Endothelial cell of umbilical vein (primary cell): ENCODE measurements at regions of chr6 and their contacts with region 1.

Region 1: DNA sequence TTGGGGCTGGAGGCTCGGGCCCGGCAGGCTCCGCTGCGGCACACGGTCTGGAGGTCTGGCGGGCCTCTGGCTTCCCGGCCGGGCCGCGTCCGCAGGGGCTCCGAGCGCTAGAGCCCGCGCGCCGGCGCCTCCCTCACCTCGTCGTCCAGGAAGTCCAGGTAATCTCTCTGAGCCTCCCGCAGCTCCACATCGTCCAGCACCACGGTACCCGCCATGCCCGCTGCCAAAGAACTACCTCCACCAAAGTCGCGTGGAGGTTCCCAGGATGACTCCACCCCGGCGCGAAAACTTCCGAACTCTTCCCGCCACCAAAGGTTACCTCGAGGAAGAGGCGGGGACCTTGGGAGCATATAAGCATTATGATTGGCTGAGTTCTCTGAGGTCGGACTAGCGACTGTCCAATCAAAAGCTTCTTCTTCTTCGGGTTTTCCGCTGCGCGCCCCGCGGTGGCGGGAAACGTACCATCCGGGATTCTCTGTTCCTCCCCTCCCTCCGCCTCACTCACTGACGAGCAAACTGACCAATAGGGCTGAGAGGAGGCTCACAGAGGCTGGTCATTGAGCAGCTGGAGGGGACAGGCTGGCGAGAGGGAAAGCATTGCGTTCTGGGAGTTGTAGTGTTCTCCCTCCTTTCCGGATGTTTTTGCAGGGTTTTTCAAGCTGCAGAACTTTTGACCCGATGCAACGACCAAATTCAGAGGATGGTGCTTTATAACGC is at the start of gene MCM3:
- DNase-seq: peak; percentile 100
- H3K4me3 ChIP-seq: peak within 1 kb of the TSS; percentile 59 to 92 (median 71)
- H3K27ac ChIP-seq: peak within 1 kb of the TSS; percentile 51
- H3K4me1 ChIP-seq: peaks cover 15% of the 10 kb centered on the region
- H3K27me3 ChIP-seq: no peaks in the 10 kb centered on the region
- CTCF ChIP-seq: no peak
- POLR2A ChIP-seq: peak; percentile 47
- total RNA-seq, gene MCM3: 80.6 and 81.6 TPM in 2 replicates

Region 2: DNA sequence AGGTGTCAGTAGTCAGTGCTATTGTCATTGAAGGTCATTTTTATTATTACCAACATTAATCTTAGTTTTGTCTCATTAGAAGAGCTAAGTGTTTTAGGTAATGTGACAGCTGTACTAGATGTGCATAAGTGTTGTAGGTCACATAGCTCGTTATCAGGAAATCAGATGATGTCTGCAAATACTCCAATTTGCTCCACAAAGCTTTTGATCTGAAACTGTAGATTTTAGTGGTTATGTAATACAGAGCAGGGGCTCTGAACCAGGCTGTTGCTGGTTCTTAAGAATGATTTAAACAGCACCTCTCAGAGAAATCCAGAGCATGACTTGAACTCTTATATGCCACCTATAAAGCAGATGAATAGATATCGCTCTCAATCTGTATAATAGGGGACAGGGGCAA is 42.8 kb before region 1 on chr6:
- CTCF ChIA-PET with region 1: no interaction called
- POLR2A ChIA-PET with region 1: no interaction called
- dilution Hi-C with region 1: no loop called
- intact Hi-C with region 1: no loop called
- DNase-seq: no peak
- H3K4me3 ChIP-seq: no peak overlapping the region
- H3K27ac ChIP-seq: no peak overlapping the region
- H3K4me1 ChIP-seq: no peaks in the 10 kb centered on the region
- H3K27me3 ChIP-seq: peaks cover 0 to 2% of the 10 kb centered on the region in 2 experiments
- CTCF ChIP-seq: no peak
- POLR2A ChIP-seq: no peak

Region 3: DNA sequence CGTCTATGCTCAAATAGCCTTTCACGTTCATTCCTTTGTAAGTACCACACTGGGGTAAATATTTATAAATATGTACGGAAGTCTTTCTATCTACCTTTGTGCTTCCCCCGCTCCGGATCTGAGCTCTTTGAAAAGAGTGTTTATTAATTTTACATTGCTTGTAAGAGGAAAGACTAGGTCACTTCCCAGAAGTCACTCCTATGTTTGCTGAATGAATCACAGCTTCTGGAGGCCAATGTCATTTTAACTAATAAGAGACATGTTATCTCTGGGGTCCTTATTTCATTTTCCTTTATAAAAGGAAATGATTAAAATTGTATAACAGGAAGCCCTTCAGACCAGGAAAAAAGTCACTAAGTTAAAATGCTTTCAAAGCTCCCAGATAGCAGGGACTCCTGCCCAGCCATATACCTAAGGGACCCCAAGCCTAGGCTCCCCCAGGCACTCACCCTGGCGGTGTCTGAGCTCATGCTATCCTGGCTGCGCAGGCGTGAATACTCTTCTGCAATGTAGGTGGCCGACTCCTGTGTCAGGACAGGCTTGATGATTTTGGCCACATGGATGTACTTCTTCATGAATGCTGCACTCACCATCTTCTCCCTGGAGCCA is 12.7 kb before region 1 on chr6:
- CTCF ChIA-PET with region 1: interaction called, 20 read pairs
- POLR2A ChIA-PET with region 1: no interaction called
- dilution Hi-C with region 1: no loop called
- intact Hi-C with region 1: loop called (anchors 1 kb)
- DNase-seq: peak; percentile 85
- H3K4me3 ChIP-seq: no peak overlapping the region
- H3K27ac ChIP-seq: peak overlapping the region; percentile 65
- H3K4me1 ChIP-seq: peaks cover 24% of the 10 kb centered on the region
- H3K27me3 ChIP-seq: no peaks in the 10 kb centered on the region
- CTCF ChIP-seq: no peak
- POLR2A ChIP-seq: no peak

Region 4: GRCh38 chr6:52330470-52330869 is 45.9 kb after region 1 on chr6:
- CTCF ChIA-PET with region 1: no interaction called
- POLR2A ChIA-PET with region 1: no interaction called
- dilution Hi-C with region 1: no loop called
- intact Hi-C with region 1: no loop called
- DNase-seq: no peak
- H3K4me3 ChIP-seq: no peak overlapping the region
- H3K27ac ChIP-seq: no peak overlapping the region
- H3K4me1 ChIP-seq: no peaks in the 10 kb centered on the region
- H3K27me3 ChIP-seq: peaks cover 2 to 7% of the 10 kb centered on the region in 2 experiments
- CTCF ChIP-seq: no peak
- POLR2A ChIP-seq: no peak

Region 5: GRCh38 chr6:52352239-52353008 is 67.8 kb after region 1 on chr6:
- CTCF ChIA-PET with region 1: interaction called, 8 read pairs
- POLR2A ChIA-PET with region 1: no interaction called
- dilution Hi-C with region 1: no loop called
- intact Hi-C with region 1: loop called (anchors 2 kb)
- DNase-seq: peak; percentile 85
- H3K4me3 ChIP-seq: no peak overlapping the region
- H3K27ac ChIP-seq: peak overlapping the region; percentile 26
- H3K4me1 ChIP-seq: peaks cover 13% of the 10 kb centered on the region
- H3K27me3 ChIP-seq: peaks cover 1 to 2% of the 10 kb centered on the region in 2 experiments
- CTCF ChIP-seq: no peak
- POLR2A ChIP-seq: no peak

Region 6: DNA sequence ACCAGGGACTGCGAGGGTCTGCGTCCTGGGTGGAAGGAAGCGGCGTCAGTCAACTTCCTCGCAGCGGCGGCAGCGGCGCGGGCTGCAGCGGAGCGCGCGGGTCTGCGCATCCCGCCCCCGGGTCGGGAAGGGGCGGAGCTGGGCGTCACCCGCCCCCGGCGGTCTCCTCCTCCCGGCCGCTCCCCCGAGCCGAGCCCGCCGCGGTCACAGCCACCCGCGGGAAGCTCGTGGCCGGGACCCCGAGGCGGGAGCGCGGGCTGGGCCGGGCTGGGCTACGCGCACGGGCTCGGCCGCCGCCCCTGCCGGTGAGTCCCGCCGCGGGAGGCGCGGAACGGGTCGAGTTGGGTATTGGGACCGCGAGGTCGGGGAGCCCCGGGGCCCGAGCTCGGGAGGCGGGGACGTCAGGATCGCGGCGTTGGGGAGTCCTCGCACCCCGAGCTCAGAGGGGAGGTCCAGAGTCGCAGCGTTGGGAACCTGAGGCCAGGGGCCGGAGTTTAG is 77.4 kb after region 1 on chr6 and contains the start of gene PAQR8:
- CTCF ChIA-PET with region 1: interaction called, 13 read pairs
- POLR2A ChIA-PET with region 1: interaction called, 9 read pairs
- dilution Hi-C with region 1: no loop called
- intact Hi-C with region 1: loop called (anchors 1 kb)
- DNase-seq: peak; percentile 66
- H3K4me3 ChIP-seq: peak within 1 kb of the TSS; percentile 78 to 97 (median 88)
- H3K27ac ChIP-seq: peak within 1 kb of the TSS; percentile 41
- H3K4me1 ChIP-seq: peaks cover 12% of the 10 kb centered on the region
- H3K27me3 ChIP-seq: no peaks in the 10 kb centered on the region
- CTCF ChIP-seq: no peak
- POLR2A ChIP-seq: peak; percentile 42
- total RNA-seq, gene PAQR8: 6.0 TPM in 2 replicates

Region 7: GRCh38 chr6:52389626-52390360 is 105.2 kb after region 1 on chr6:
- CTCF ChIA-PET with region 1: interaction called, 12 read pairs
- POLR2A ChIA-PET with region 1: no interaction called
- dilution Hi-C with region 1: loop called (anchors 25 kb)
- intact Hi-C with region 1: loop called (anchors 2 kb)
- DNase-seq: peak; percentile 73
- H3K4me3 ChIP-seq: no peak overlapping the region
- H3K27ac ChIP-seq: peak overlapping the region; percentile 37
- H3K4me1 ChIP-seq: peaks cover 20% of the 10 kb centered on the region
- H3K27me3 ChIP-seq: no peaks in the 10 kb centered on the region
- CTCF ChIP-seq: no peak
- POLR2A ChIP-seq: no peak

Region 8: DNA sequence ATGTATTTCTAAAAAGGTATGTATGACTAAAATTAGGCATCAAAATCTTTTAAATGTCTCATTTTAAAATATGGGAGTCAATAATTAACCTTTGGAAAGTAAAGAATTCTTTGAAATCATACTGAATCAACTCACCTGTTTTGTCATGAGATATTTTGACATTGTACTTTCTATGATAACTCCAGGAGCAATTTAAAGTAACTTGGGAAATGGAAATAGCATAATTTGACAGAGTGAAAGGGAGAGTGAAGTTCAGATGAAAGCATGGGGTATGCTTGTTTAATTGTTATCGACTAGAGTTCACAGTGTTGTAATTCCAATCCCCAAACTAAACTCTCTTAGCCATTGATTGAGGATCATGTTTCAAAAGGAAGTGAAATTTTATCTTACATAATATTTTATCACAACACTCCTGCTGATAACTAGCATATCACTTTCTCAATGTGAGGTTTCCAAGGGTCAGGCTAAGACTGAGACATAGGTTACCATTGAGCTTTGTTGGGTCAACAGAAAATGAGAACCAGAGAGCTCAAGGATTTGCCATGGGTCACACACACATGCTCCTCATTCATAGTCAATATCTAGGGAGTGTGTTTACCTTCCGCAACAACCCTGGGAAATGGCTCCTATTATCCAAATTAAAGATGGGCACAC is 516.7 kb after region 1 on chr6:
- CTCF ChIA-PET with region 1: no interaction called
- POLR2A ChIA-PET with region 1: no interaction called
- dilution Hi-C with region 1: no loop called
- intact Hi-C with region 1: no loop called
- DNase-seq: no peak
- H3K4me3 ChIP-seq: no peak overlapping the region
- H3K27ac ChIP-seq: no peak overlapping the region
- H3K4me1 ChIP-seq: no peaks in the 10 kb centered on the region
- H3K27me3 ChIP-seq: no peaks in the 10 kb centered on the region
- CTCF ChIP-seq: no peak
- POLR2A ChIP-seq: no peak

Region 9: DNA sequence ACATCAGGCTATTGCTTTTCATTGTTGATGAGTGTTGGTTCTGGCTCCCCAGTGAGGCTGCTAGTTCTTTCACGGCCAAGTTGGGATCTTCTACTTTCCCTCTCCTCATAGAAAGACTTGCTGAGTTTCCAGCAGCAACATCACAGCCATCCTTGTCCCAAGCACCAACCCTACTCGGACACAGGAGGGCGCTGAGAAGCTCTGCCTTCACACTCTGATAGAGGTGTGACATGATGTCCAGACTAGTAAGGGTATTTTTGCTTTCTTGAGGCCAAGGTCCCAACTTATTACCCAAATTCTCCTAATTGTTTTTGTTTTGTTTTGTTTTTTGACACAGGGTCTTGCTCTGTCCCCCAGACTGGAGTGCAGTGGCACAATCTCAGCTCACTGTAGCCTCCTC is 867.1 kb after region 1 on chr6:
- CTCF ChIA-PET with region 1: no interaction called
- POLR2A ChIA-PET with region 1: no interaction called
- dilution Hi-C with region 1: no loop called
- intact Hi-C with region 1: no loop called
- DNase-seq: no peak
- H3K4me3 ChIP-seq: no peak overlapping the region
- H3K27ac ChIP-seq: no peak overlapping the region
- H3K4me1 ChIP-seq: no peaks in the 10 kb centered on the region
- H3K27me3 ChIP-seq: peaks cover 0 to 3% of the 10 kb centered on the region in 2 experiments
- CTCF ChIP-seq: peak; percentile 6 to 46
- POLR2A ChIP-seq: no peak